Activated naive CD4-positive, alpha-beta T cell treated with anti-CD3 and anti-CD28 coated beads, Interleukin-2, amount 10 ng/mL, durations not matched to agents 7 days and 5 days (primary cell): ENCODE measurements at regions of chr5 and their contacts with region 1.

Region 1: GRCh38 chr5:7897014-7897632 is 28.2 kb downstream of the MTRR start:
- DNase-seq: peak; percentile 29
- H3K4me3 Mint-ChIP-seq: no peak overlapping the region
- H3K27ac Mint-ChIP-seq: no peak overlapping the region
- H3K4me1 Mint-ChIP-seq: peaks cover 14% of the 10 kb centered on the region
- H3K27me3 Mint-ChIP-seq: no peaks in the 10 kb centered on the region

Region 2: GRCh38 chr5:7868773-7869473 is 28.2 kb before region 1 on chr5 and contains the starts of genes FASTKD3 and MTRR:
- CTCF ChIA-PET with region 1: no interaction called
- DNase-seq: peak; percentile 94
- H3K4me3 Mint-ChIP-seq: peak within 1 kb of the TSS; percentile 86
- H3K27ac Mint-ChIP-seq: peak within 1 kb of the TSS; percentile 92
- H3K4me1 Mint-ChIP-seq: peaks cover 68% of the 10 kb centered on the region
- H3K27me3 Mint-ChIP-seq: no peaks in the 10 kb centered on the region

Region 3: GRCh38 chr5:7886849-7887475 is 10.2 kb before region 1 on chr5:
- CTCF ChIA-PET with region 1: interaction called, 10 read pairs
- DNase-seq: no peak
- H3K4me3 Mint-ChIP-seq: no peak overlapping the region
- H3K27ac Mint-ChIP-seq: no peak overlapping the region
- H3K4me1 Mint-ChIP-seq: peaks cover 2% of the 10 kb centered on the region
- H3K27me3 Mint-ChIP-seq: no peaks in the 10 kb centered on the region